Heart left ventricle (tissue), 16 donors: ENCODE measurements at regions of chr20 and their contacts with region 1.

Region 1: DNA sequence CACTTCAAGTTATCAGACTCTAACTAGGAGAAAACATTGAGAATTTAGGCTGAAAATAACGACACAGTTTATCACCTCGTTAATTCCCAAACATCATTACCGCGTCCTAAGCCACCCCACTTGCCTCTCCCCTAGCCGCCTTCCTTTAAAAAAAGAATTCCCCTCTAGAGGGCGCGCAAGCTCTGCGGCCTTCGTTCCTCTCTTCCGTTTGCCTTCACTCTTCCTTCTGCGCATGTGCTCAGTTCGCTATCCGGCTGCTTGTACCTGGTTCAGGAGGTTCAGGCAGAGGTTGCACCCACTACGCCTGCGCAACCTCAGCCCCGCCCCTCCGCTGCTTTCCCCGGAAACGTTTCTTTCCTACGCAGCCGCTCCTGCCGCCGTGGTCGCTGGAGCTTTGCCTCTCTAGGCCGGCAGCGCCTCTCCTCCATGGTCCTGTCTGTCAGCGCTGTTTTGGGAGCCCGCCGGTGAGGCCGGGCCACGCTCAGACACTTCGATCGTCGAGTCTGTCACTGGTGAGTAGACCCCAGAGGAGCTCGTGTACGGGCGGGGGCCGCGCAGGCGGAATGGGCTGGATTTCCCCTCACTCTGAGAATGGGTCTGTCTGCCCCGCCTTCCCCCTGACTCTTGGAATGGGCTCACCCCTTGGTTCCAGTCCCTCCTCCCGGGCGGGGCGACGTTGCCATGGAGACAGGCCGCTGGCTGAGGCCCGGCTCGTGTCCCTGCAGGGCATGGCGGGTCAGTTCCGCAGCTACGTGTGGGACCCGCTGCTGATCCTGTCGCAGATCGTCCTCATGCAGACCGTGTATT is at the start of gene SYS1:
- DNase-seq: peak; percentile 98 to 99 (median 98)
- ATAC-seq: peak; percentile 90 to 94 (median 92)
- H3K4me3 ChIP-seq: peak within 1 kb of the TSS; percentile 59 to 84 (median 72)
- H3K27ac ChIP-seq: peak within 1 kb of the TSS; percentile 77 to 98 (median 96)
- H3K4me1 ChIP-seq: peaks cover 5 to 72% (median 35%) of the 10 kb centered on the region in 12 donors
- H3K27me3 ChIP-seq: no peaks in the 10 kb centered on the region
- CTCF ChIP-seq: peak; percentile 85 to 97 (median 90)
- POLR2A ChIP-seq: peak; percentile 36 to 87
- total RNA-seq, gene SYS1: 16.4 to 54.0 (median 23.0) TPM

Region 2: GRCh38 chr20:45052698-45053429 is 310.1 kb before region 1 on chr20:
- intact Hi-C with region 1: no loop called
- DNase-seq: no peak
- ATAC-seq: no peak
- H3K4me3 ChIP-seq: no peak overlapping the region
- H3K27ac ChIP-seq: peak overlapping the region in 4 of 12 donors; percentile 0 to 57 (median 12)
- H3K4me1 ChIP-seq: peaks cover 0 to 50% (median 29%) of the 10 kb centered on the region in 12 donors
- H3K27me3 ChIP-seq: no peaks in the 10 kb centered on the region
- CTCF ChIP-seq: no peak
- POLR2A ChIP-seq: no peak

Region 3: GRCh38 chr20:45322952-45323383 is 40.0 kb before region 1 on chr20:
- intact Hi-C with region 1: loop called in 3 of 10 experiments (anchors 2 to 5 kb)
- DNase-seq: peak in 4 of 5 donors; percentile 63 to 80 (median 74)
- ATAC-seq: peak; percentile 77 to 82 (median 80)
- H3K4me3 ChIP-seq: no peak overlapping the region
- H3K27ac ChIP-seq: peak overlapping the region in 2 of 12 donors; percentile 41 to 42
- H3K4me1 ChIP-seq: peaks cover 0 to 22% (median 0%) of the 10 kb centered on the region in 12 donors
- H3K27me3 ChIP-seq: peaks cover 0 to 2% (median 0%) of the 10 kb centered on the region in 9 donors
- CTCF ChIP-seq: peak; percentile 17 to 63 (median 46)
- POLR2A ChIP-seq: no peak

Region 4: DNA sequence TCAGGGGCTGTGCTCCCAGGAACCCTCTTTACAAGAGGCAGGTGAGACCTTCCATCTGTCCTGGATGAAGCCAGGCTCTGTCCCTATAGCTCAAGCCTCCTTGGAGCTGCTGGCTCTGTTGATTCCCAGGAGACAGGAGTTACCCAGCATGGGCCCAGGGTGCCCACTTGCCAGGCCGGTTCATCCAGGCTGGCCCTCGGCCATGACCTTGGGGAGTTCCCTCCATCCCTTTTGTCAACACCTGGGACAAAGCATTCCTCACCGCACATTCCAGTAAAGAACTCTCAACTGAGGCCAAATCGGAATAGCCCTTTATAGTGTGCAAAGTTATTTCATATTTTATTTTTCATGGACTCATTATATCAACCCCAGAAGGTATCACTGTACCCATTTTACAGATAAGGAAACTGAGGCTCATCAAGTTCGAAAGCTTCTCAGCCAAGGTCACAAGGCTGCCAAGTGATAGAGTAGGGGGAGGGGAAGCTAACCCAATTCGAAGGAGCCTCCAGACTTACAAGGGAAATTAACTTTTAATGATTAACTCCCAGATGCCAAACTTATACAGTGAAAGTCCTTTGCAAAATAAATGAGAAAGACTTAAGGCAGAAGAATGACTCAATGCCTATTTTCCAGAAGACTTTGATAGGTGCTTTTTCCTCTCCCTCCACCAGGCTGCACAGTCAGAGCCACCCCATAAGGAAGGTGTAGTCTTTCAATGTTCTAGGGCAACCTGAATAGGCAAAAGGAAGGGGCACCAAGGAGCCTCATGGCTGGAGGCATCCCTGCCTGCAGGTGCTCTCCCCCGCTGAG is 33.3 kb before region 1 on chr20:
- intact Hi-C with region 1: loop called in 2 of 10 experiments (anchors 5 kb)
- DNase-seq: no peak
- ATAC-seq: no peak
- H3K4me3 ChIP-seq: no peak overlapping the region
- H3K27ac ChIP-seq: peak overlapping the region in 1 of 12 donors; percentile 19
- H3K4me1 ChIP-seq: peaks cover 0 to 5% (median 0%) of the 10 kb centered on the region in 12 donors
- H3K27me3 ChIP-seq: no peaks in the 10 kb centered on the region
- CTCF ChIP-seq: no peak
- POLR2A ChIP-seq: no peak

Region 5: DNA sequence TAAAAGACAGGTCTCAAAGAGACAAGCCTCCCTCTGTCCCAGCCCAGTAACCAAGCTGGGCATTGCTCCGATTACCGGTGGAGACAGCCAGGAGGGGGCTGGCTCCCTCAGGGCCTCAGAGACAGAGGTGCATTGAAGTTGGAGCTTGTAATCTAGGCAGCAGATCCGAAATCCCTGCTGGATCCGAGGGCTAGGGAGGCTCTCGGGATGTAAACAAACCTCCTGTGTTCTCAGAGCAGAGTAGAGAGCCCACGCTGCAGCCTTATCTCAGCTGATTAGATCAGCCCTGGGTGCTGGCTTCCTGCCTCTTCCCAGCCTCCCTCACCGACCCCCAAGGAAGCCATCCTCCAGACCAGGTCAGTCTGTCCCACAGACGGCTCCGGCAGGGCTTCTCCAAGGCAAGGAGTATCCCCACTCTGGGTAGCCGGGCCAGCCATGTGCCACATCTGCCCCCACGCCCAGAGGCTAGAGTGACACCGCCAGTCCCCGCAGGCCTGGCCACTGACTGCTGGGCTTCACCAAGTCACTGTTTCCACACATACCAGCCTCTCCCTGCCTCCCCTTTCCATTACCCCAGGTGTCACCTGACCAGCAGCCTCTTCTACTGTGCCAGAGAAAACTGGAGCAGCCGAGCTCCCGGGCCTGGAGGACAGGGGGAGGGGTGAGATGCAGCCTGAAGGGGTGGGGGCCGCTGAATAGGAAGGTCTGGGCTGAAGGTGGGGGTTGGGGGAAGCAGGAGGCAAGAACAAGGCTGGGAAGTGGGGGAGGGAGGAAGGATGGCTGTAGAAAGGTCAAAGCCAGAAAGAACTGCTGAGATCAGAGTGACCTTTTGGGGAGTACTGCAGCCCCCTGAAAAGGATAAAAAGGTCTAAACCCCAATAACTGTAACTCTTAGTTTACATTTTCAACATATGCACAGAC is 20.8 kb before region 1 on chr20:
- intact Hi-C with region 1: loop called in 2 of 10 experiments (anchors 2 kb)
- DNase-seq: peak; percentile 72 to 88 (median 79)
- ATAC-seq: peak; percentile 74 to 84 (median 79)
- H3K4me3 ChIP-seq: peak overlapping the region in 10 of 12 donors; percentile 3 to 70 (median 16)
- H3K27ac ChIP-seq: peak overlapping the region; percentile 84 to 97 (median 95)
- H3K4me1 ChIP-seq: peaks cover 8 to 99% (median 88%) of the 10 kb centered on the region in 12 donors
- H3K27me3 ChIP-seq: no peaks in the 10 kb centered on the region
- CTCF ChIP-seq: no peak
- POLR2A ChIP-seq: peak in 1 of 2 donors; percentile 75

Region 6: DNA sequence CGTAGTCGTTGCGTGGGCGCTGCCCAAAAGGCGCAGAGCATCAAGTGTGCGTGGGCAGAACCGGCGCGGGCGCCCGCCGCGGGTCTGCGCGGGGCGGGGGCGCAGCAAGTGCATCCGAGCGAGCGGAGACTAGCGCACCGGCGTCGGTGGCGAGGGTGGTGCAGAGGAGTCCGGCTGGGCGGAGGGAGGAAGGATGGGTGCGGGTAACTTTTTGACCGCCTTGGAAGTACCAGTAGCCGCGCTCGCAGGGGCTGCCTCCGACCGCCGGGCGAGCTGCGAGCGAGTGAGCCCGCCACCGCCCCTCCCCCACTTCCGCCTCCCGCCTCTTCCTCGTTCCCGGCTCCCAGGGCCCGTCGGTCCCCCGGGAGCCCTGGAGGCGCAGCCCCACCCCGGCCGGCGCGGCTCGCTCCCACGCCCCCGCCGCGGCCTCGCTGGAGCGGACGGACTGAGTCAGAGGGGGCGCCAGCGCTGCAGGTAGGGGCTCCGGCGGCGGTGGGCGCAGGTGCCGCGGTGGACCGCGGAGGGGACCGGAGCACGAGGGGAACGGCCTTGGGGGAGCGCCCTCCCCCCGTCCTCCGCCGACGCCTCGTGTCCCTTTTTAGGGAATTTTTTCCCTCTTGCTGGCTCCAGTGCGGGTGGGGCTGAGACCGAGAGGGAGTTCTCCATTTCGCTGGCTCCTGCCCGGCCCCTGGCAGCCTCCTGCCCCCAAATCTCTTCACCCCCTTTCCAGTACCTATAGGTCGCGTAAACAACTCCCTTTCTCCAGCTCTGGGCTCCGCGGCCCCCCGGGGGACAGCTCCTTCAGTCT is 43.5 kb after region 1 on chr20:
- intact Hi-C with region 1: loop called in 2 of 10 experiments (anchors 2 kb)
- DNase-seq: peak; percentile 90 to 92 (median 91)
- ATAC-seq: peak; percentile 5 to 67 (median 49)
- H3K4me3 ChIP-seq: peak overlapping the region; percentile 69 to 98 (median 84)
- H3K27ac ChIP-seq: peak overlapping the region; percentile 96 to 100 (median 99)
- H3K4me1 ChIP-seq: peaks cover 0 to 52% (median 30%) of the 10 kb centered on the region in 12 donors
- H3K27me3 ChIP-seq: peaks cover 0 to 5% (median 0%) of the 10 kb centered on the region in 9 donors
- CTCF ChIP-seq: peak in 3 of 12 donors; percentile 24 to 50 (median 44)
- POLR2A ChIP-seq: peak in 1 of 2 donors; percentile 69

Region 7: DNA sequence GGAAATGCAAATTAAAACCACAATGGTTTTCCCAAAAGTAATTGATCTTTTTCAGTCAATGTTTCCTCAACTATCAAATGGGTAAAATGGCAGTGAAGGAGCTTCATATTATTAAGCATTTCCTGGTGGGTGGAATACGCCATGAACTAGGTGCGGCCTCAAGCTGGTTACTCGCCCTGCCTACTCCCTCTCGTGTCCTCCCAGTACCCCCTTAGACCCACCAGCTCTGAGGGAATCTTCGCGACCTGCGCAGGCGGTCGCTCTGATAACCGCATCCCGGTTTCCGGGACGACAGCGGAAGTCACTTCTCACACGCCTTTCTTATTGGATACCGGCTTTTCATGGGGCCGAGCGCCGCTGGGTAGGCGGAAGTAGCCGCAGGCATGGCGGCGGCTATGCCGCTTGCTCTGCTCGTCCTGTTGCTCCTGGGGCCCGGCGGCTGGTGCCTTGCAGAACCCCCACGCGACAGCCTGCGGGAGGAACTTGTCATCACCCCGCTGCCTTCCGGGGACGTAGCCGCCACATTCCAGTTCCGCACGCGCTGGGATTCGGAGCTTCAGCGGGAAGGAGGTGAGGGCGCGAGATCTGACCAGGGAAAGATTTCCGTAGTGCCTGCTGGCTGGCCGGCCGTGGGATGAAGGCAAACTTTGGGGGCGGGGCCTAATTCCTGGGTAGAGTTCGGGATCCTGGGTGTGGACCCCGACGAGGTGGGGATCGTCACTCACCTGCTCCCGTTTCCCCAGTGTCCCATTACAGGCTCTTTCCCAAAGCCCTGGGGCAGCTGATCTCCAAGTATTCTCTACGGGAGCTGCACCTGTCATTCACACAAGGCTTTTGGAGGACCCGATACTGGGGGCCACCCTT is 53.0 kb after region 1 on chr20 and contains the start of gene PIGT:
- intact Hi-C with region 1: loop called in 4 of 10 experiments (anchors 5 kb)
- DNase-seq: peak; percentile 87 to 92 (median 88)
- ATAC-seq: peak; percentile 65 to 84 (median 77)
- H3K4me3 ChIP-seq: peak within 1 kb of the TSS; percentile 52 to 97 (median 82)
- H3K27ac ChIP-seq: peak within 1 kb of the TSS; percentile 55 to 90 (median 83)
- H3K4me1 ChIP-seq: peaks cover 0 to 62% (median 42%) of the 10 kb centered on the region in 12 donors
- H3K27me3 ChIP-seq: no peaks in the 10 kb centered on the region
- CTCF ChIP-seq: no peak
- POLR2A ChIP-seq: peak; percentile 52 to 92
- total RNA-seq, gene PIGT: 124 to 224 (median 165) TPM

Region 8: DNA sequence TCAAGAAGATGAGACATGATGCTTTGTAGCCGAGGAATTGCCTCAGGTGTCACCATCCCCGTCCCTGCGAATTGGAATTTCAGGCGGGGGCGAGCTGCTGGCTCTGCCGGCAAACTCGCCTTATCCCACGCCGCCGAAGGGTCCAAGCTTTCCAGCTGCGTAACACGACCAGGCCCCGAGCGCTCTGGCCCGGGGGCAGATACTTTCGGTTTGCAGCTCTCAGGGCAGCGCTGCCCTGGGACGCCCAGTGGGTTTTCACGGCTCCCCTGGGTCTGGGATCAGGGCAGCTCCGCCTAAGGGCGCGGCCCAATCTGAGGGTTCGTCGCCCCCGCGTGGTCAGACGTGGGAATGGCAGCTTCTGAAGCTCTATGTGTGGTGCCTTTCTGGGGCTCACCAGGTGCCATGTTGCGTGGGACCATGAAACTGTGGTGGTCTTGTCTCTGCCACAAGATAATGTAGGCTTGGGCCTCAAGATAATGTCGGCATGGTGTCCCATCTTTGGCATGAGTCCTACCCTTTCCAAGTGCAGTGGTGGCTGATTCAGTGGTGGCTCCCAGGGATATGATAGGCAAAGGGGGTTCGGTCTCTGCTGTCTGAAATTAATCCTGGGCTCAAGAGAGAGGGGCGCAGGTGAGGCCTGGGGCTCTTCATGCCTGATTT is 73.9 kb after region 1 on chr20:
- intact Hi-C with region 1: loop called in 5 of 10 experiments (anchors 1 to 2 kb)
- DNase-seq: peak; percentile 88 to 94 (median 90)
- ATAC-seq: peak; percentile 95 to 97 (median 96)
- H3K4me3 ChIP-seq: peak overlapping the region; percentile 39 to 77 (median 62)
- H3K27ac ChIP-seq: peak overlapping the region in 11 of 12 donors; percentile 65 to 85 (median 73)
- H3K4me1 ChIP-seq: peaks cover 0 to 15% (median 7%) of the 10 kb centered on the region in 12 donors
- H3K27me3 ChIP-seq: no peaks in the 10 kb centered on the region
- CTCF ChIP-seq: peak; percentile 93 to 100 (median 96)
- POLR2A ChIP-seq: peak in 1 of 2 donors; percentile 36

Region 9: GRCh38 chr20:45919542-45920399 is 556.8 kb after region 1 on chr20:
- intact Hi-C with region 1: no loop called
- DNase-seq: peak; percentile 81 to 93 (median 86)
- ATAC-seq: peak; percentile 68 to 74 (median 69)
- H3K4me3 ChIP-seq: peak overlapping the region in 2 of 12 donors; percentile 18 to 19
- H3K27ac ChIP-seq: peak overlapping the region; percentile 57 to 92 (median 76)
- H3K4me1 ChIP-seq: peaks cover 3 to 85% (median 37%) of the 10 kb centered on the region in 12 donors
- H3K27me3 ChIP-seq: no peaks in the 10 kb centered on the region
- CTCF ChIP-seq: no peak
- POLR2A ChIP-seq: no peak